Activated naive CD4-positive, alpha-beta T cell treated with anti-CD3 and anti-CD28 coated beads for 36 hours (primary cell): ENCODE measurements at regions of chr12 and their contacts with region 1.

Region 1: DNA sequence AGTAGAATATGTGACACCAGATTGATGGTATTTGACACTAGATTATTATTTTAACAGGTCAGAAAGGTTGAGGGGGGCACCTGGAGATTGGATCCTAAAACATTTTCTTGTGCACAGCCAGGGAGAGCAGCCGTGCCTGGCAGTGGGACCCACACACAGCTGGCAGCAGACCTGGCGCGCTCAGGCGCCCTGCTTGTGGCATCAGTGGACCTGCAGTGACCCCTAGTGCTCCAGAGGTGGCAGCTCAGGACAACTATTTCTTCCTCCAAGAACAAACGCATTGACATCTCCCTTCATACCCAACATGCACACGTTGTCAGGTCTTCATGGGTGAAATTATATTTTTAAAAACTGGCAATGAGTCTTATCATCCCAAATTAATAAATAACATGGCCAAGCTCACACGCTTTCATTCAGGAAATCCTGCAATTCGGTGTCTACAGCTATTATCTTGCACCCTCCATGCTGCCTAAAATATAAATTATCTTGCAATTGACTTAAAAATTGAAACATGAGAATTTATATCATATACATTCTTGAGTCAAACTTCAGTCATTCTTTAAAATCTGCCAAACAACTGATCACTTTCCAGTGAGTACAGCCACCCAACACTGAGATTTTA is 7.7 kb upstream of the TMEM132D start:
- DNase-seq: peak; percentile 54
- H3K4me3 Mint-ChIP-seq: no peak overlapping the region
- H3K27ac Mint-ChIP-seq: no peak overlapping the region
- H3K4me1 Mint-ChIP-seq: no peaks in the 10 kb centered on the region
- H3K27me3 Mint-ChIP-seq: peaks cover 14% of the 10 kb centered on the region

Region 2: DNA sequence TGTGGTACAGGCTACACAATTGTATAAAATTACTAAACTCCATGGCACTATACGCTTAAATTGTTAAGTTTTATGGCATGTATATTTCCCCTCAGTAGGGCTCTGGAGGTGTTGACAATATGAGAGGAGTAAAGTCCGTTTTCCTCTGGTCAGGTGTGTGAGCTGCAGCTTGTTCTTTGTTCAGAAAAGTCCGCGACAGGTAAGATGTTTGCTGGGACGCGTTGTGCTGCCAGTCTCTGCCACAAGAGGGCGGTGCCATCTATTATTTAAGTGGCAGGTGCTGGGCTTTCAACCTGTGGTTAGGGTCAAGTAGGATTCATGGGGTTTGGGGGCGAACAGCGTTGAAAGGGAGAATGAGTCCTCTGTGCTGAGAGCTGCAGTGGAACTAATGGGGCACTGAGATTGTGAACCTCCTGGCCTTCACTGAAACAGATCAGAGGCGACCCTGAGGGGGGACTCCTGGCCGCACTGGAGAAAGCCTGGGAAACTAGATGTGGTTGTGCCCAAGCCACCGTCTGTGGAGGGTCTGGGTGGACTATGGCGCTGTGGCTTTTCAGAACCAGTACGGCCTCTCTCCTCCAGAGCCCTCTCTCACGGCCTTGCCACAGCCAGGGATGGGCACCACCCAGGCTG is 1266.8 kb before region 1 on chr12:
- CTCF ChIA-PET with region 1: no interaction called
- intact Hi-C with region 1: loop called (anchors 2 kb)
- DNase-seq: peak; percentile 44
- H3K4me3 Mint-ChIP-seq: no peak overlapping the region
- H3K27ac Mint-ChIP-seq: no peak overlapping the region
- H3K4me1 Mint-ChIP-seq: no peaks in the 10 kb centered on the region
- H3K27me3 Mint-ChIP-seq: peaks cover 4% of the 10 kb centered on the region

Region 3: GRCh38 chr12:128969480-128970055 is 942.0 kb before region 1 on chr12:
- CTCF ChIA-PET with region 1: interaction called, 3 read pairs
- intact Hi-C with region 1: loop called (anchors 2 kb)
- DNase-seq: peak; percentile 41
- H3K4me3 Mint-ChIP-seq: no peak overlapping the region
- H3K27ac Mint-ChIP-seq: no peak overlapping the region
- H3K4me1 Mint-ChIP-seq: peaks cover 4% of the 10 kb centered on the region
- H3K27me3 Mint-ChIP-seq: peaks cover 26% of the 10 kb centered on the region

Region 4: GRCh38 chr12:129949651-129950050 is 38.1 kb after region 1 on chr12:
- CTCF ChIA-PET with region 1: no interaction called
- intact Hi-C with region 1: no loop called
- DNase-seq: no peak
- H3K4me3 Mint-ChIP-seq: no peak overlapping the region
- H3K27ac Mint-ChIP-seq: no peak overlapping the region
- H3K4me1 Mint-ChIP-seq: no peaks in the 10 kb centered on the region
- H3K27me3 Mint-ChIP-seq: peaks cover 2% of the 10 kb centered on the region